ENCODE measurements at regions of chr1 and their contacts with region 1.

Region 1: DNA sequence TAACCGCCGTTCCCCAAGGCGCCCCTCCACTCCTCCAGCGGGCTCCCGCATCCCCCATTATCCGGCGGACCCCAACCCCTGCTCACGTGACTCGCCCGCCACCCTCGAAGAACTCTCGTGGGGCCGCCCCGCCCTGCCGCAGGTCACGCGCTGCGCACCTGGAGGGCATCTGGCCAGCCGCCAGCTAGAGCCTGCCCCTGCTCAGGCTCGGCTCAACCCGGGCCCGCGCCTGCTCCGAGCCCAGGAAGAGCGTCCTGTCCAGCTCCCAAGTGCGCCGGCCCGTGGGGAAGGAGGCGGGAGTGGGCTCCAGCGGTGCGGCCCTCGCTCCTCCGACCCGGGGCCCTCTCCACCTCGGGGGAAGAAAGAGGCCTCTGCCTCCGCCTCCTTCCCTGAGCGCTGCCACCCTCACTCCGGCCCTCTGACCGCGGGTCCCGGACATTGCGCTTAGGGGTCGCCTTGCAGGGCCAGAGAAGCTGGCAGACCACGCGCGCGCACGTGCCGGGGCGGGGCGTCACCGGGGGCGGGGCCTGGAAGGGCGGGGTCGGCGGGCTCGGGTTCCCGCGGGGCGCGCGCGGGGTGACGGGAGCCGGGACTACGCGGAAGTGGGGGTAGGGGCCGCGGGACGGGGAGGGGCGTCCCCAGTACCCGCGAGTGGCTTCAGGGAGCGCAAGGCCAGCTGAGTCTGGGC is 28.4 kb downstream of the HMGN2 start:
- DNase-seq: peak; percentile 88 to 93
- ATAC-seq: peak; percentile 92 to 95 (median 94)
- H3K4me3 ChIP-seq: peak overlapping the region; percentile 15 to 90 (median 75)
- H3K27ac ChIP-seq: peak overlapping the region; percentile 77 to 98 (median 95)
- H3K4me1 ChIP-seq: peaks cover 2 to 21% (median 16%) of the 10 kb centered on the region in 9 donors
- H3K27me3 ChIP-seq: no peaks in the 10 kb centered on the region
- CTCF ChIP-seq: peak in 4 of 9 donors; percentile 7 to 37 (median 29)

Region 2: GRCh38 chr1:26472901-26473845 is 27.5 kb before region 1 on chr1:
- intact Hi-C with region 1: loop called in 1 of 10 experiments (anchors 2 kb)
- DNase-seq: peak; percentile 95 to 98
- ATAC-seq: peak; percentile 89 to 94 (median 92)
- H3K4me3 ChIP-seq: peak overlapping the region; percentile 69 to 100 (median 98)
- H3K27ac ChIP-seq: peak overlapping the region; percentile 95 to 100 (median 100)
- H3K4me1 ChIP-seq: peaks cover 3 to 52% (median 35%) of the 10 kb centered on the region in 9 donors
- H3K27me3 ChIP-seq: no peaks in the 10 kb centered on the region
- CTCF ChIP-seq: no peak

Region 3: DNA sequence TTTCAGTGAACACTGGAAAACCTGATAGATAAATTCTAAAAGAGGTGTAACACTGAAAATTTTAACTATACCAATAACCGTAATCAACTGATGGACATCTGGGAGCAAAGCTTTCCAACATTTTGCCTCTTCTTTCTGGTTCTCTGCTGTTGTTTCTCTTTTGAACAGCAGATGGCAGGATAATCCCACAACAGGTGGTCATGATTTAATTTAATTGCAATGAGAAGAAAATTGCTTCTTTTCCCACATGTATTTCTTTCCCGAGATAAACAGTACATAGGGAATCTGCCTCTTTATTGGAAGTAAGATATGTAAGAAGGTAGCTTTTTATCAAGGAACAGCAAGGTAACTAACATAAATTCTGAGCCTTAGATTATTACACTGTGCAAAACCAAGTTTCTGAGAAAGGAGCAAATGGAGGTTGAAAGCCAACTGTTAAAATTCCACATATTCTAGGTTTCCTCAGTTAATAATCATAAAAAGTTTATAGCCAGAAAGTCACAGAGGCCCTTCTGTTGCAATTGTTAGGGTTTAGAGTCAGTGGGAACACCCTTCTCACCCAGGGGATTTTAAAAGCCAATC is 101.8 kb after region 1 on chr1:
- intact Hi-C with region 1: loop called in 4 of 10 experiments (anchors 5 to 10 kb)
- DNase-seq: peak in 1 of 2 donors; percentile 70
- ATAC-seq: peak in 3 of 8 donors; percentile 46 to 54 (median 52)
- H3K4me3 ChIP-seq: no peak overlapping the region
- H3K27ac ChIP-seq: no peak overlapping the region
- H3K4me1 ChIP-seq: peaks cover 0 to 8% (median 5%) of the 10 kb centered on the region in 9 donors
- H3K27me3 ChIP-seq: no peaks in the 10 kb centered on the region
- CTCF ChIP-seq: peak; percentile 77 to 95 (median 87)

Region 4: GRCh38 chr1:26799479-26800142 is 299.0 kb after region 1 on chr1:
- intact Hi-C with region 1: loop called in 1 of 10 experiments (anchors 5 kb)
- DNase-seq: peak; percentile 73 to 74
- ATAC-seq: peak; percentile 75 to 95 (median 88)
- H3K4me3 ChIP-seq: peak overlapping the region in 1 of 10 donors; percentile 33
- H3K27ac ChIP-seq: peak overlapping the region; percentile 70 to 92 (median 86)
- H3K4me1 ChIP-seq: peaks cover 10 to 61% (median 51%) of the 10 kb centered on the region in 9 donors
- H3K27me3 ChIP-seq: no peaks in the 10 kb centered on the region
- CTCF ChIP-seq: no peak